ENCODE measurements at regions of chr12 and their contacts with region 1.

Region 1: GRCh38 chr12:47032644-47033043 is 46.8 kb upstream of the PCED1B start:
- DNase-seq: peak; percentile 62
- H3K4me3 Mint-ChIP-seq: no peak overlapping the region
- H3K27ac Mint-ChIP-seq: peak overlapping the region; percentile 72
- H3K4me1 Mint-ChIP-seq: peaks cover 21% of the 10 kb centered on the region
- H3K27me3 Mint-ChIP-seq: no peaks in the 10 kb centered on the region
- CTCF ChIP-seq: peak; percentile 51

Region 2: DNA sequence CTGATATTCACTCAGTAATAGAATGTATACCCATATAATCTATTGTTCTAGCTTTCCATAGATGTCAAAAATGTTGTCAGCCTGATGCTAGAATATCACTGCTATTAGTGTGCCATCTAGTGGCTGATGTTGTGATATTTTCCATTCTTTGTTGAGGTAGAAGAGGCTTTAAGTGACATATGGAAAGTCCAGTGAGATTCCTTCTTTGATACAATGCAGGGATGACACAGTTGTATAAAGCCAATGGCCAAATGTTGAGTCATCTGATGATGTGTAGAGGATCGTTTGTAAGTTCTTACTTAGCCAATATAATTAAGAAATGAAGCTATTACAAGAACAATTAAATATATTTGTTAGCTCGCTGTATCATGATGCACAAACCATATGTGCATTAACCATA is 11.3 kb before region 1 on chr12:
- CTCF ChIA-PET with region 1: interaction called, 11 read pairs
- POLR2A ChIA-PET with region 1: interaction called, 3 read pairs
- intact Hi-C with region 1: no loop called
- DNase-seq: peak; percentile 86
- H3K4me3 Mint-ChIP-seq: no peak overlapping the region
- H3K27ac Mint-ChIP-seq: no peak overlapping the region
- H3K4me1 Mint-ChIP-seq: peaks cover 34% of the 10 kb centered on the region
- H3K27me3 Mint-ChIP-seq: no peaks in the 10 kb centered on the region
- CTCF ChIP-seq: peak; percentile 57

Region 3: DNA sequence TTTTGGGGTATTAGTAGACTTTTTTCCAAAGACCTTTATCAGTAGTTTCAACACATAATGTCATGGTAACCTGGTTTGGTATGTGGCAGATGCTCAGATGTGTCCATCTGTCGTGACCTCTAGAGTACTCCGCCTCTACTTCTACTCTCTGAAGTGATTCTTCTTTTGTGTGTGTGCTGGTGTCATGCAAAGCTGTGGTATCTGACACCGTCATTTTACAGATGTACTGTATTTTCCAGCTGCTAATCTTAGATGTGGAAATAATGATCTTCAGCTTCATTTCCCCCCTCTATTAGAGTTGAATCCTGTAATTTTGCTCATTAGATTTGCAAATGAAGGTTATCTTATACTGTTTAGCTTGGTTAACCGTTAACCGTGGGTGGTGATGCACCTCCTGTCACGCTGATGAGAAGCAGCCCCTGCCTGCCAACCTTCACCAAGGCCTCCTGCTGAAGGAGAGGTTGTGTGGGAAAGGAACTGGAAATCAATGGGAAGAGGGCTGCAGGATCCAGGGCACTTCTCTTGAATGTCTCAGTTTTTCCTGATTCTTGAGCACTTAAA is 269.5 kb after region 1 on chr12:
- CTCF ChIA-PET with region 1: interaction called, 43 read pairs
- POLR2A ChIA-PET with region 1: no interaction called
- intact Hi-C with region 1: no loop called
- DNase-seq: no peak
- H3K4me3 Mint-ChIP-seq: no peak overlapping the region
- H3K27ac Mint-ChIP-seq: no peak overlapping the region
- H3K4me1 Mint-ChIP-seq: peaks cover 6% of the 10 kb centered on the region
- H3K27me3 Mint-ChIP-seq: no peaks in the 10 kb centered on the region
- CTCF ChIP-seq: no peak

Region 4: DNA sequence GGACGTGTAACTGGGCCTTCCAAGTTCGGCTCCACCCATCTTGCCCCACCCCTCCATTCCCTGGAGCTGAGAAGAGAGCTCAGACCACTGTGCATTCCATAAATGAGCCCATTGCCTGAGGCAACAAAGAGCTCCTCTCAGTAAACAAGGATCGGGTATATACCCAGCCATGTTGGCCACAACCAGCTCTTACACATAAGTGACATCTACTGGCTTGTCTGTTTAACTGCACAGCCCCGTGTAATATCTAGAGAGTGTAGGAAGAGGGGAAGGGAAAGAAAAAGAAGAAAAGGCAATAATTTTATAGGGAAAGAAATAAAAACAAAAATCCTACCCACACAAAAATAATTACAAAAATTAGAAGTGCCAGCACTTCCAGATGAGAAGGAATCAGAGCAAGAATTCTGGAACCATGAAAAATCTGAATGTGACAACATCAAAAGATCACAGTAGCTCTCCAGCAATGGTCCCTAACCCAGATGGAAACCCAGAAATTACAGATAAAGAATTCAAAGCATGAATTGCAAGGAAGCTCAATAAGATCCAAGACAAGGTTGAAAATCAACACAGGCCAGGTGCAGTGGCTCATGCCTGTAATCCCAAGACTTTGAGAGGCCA is 365.1 kb after region 1 on chr12:
- CTCF ChIA-PET with region 1: interaction called, 69 read pairs
- POLR2A ChIA-PET with region 1: interaction called, 19 read pairs
- intact Hi-C with region 1: loop called (anchors 1 kb)
- DNase-seq: peak; percentile 77
- H3K4me3 Mint-ChIP-seq: no peak overlapping the region
- H3K27ac Mint-ChIP-seq: no peak overlapping the region
- H3K4me1 Mint-ChIP-seq: no peaks in the 10 kb centered on the region
- H3K27me3 Mint-ChIP-seq: no peaks in the 10 kb centered on the region
- CTCF ChIP-seq: peak; percentile 66

Region 5: GRCh38 chr12:47636908-47637780 is 604.5 kb after region 1 on chr12:
- CTCF ChIA-PET with region 1: interaction called, 15 read pairs
- POLR2A ChIA-PET with region 1: no interaction called
- intact Hi-C with region 1: loop called (anchors 2 kb)
- DNase-seq: peak; percentile 70
- H3K4me3 Mint-ChIP-seq: no peak overlapping the region
- H3K27ac Mint-ChIP-seq: no peak overlapping the region
- H3K4me1 Mint-ChIP-seq: no peaks in the 10 kb centered on the region
- H3K27me3 Mint-ChIP-seq: no peaks in the 10 kb centered on the region
- CTCF ChIP-seq: peak; percentile 46

Region 6: DNA sequence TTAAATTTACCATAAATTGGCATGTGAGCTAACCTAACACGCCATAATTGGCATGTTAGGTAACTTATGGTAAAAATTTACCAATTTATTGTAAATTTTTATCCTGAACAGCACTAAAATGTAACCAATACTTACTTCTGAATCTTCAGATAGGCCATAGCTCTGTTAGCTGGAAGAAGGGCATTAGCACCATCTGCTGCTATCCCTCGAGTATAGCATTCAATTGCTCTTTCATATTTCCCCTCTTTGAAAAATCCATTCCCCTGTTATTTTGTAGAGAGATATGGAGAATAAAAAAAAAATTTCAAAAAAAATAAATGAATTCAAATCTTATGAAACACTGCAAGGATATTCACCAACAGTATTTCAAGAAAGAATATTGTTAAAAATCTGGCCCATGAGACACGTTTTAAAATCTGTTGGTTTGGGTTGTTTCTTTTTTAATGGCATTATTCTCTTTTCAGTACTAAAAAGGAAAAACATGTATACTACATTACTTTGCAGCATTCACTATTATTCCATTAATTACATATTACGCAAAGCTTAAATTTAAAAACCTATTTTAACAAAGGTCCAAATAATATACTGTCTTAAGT is 654.1 kb after region 1 on chr12:
- CTCF ChIA-PET with region 1: interaction called, 36 read pairs
- POLR2A ChIA-PET with region 1: interaction called, 4 read pairs
- intact Hi-C with region 1: loop called (anchors 1 kb)
- DNase-seq: peak; percentile 44
- H3K4me3 Mint-ChIP-seq: no peak overlapping the region
- H3K27ac Mint-ChIP-seq: no peak overlapping the region
- H3K4me1 Mint-ChIP-seq: no peaks in the 10 kb centered on the region
- H3K27me3 Mint-ChIP-seq: no peaks in the 10 kb centered on the region
- CTCF ChIP-seq: peak; percentile 52

Measured in MCF 10A (cell line).